Caco-2 (cell line): ENCODE measurements at regions of chr16 and their contacts with region 1.

Region 1: DNA sequence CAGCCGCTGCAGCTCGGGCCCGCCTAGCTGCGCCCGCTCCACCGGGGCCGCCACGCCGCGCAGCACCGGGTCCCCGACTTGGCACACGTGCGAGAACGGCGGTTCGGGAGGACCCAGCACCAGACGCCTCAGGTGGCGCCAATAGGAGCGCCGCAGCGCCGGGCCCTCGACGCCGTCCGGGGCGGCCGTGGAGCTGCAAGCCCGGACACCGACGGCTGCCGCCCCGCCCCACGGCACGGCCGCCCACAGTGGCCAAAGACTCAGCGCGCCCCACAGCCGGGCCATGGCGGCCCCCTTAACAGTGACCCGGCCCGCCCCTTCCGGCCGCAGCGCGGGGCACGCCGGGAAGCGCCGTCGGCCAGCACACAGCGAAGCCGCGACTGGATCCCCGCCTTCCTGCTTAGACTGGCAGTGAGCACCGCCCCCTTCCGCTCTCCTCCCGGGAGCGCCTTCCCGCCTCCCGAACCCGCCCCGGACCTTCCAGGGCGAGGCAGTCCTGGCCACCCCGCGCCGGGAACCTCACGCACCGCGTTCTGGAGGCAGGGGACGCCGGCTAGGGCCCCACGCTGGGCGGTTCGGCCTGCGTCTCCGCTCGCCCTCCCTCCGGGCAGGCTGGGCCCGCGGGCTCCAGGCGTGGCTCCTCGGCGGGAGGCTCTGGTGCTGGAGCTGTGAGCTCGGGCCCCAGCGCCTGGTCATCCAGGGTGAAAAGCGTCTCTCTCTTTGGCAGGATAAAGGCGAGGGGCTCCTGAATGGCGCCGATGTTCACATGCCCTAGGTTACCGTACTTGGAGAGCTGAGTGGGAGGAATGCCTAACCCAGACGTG is at the start of gene PDF:
- DNase-seq: peak; percentile 97 to 98
- H3K4me3 ChIP-seq: peak within 1 kb of the TSS; percentile 98
- H3K4me3 Mint-ChIP-seq: peak within 1 kb of the TSS; percentile 87
- H3K27ac Mint-ChIP-seq: peak within 1 kb of the TSS; percentile 80
- H3K4me1 ChIP-seq: peaks cover 29% of the 10 kb centered on the region
- H3K4me1 Mint-ChIP-seq: peaks cover 22% of the 10 kb centered on the region
- H3K27me3 ChIP-seq: no peaks in the 10 kb centered on the region
- H3K27me3 Mint-ChIP-seq: no peaks in the 10 kb centered on the region
- CTCF ChIP-seq: no peak
- total RNA-seq, gene PDF: 42.1 and 50.7 TPM in 2 replicates

Region 2: GRCh38 chr16:69310653-69311532 is 19.6 kb before region 1 on chr16 and contains the start of gene VPS4A:
- CTCF ChIA-PET with region 1: interaction called, 3 read pairs
- POLR2A ChIA-PET with region 1: interaction called, 3 read pairs
- intact Hi-C with region 1: loop called (anchors 1 kb)
- DNase-seq: peak; percentile 97 to 100
- H3K4me3 ChIP-seq: peak within 1 kb of the TSS; percentile 96
- H3K4me3 Mint-ChIP-seq: peak within 1 kb of the TSS; percentile 81
- H3K27ac Mint-ChIP-seq: peak within 1 kb of the TSS; percentile 65
- H3K4me1 ChIP-seq: peaks cover 9% of the 10 kb centered on the region; the same call in 1 of the 2 replicates
- H3K4me1 Mint-ChIP-seq: peaks cover 5% of the 10 kb centered on the region
- H3K27me3 ChIP-seq: no peaks in the 10 kb centered on the region
- H3K27me3 Mint-ChIP-seq: no peaks in the 10 kb centered on the region
- CTCF ChIP-seq: peak; percentile 91 to 98
- total RNA-seq, gene VPS4A: 42.4 and 45.8 TPM in 2 replicates